SK-N-SH (cell line): ENCODE measurements at regions of chr17 and their contacts with region 1.

Region 1: DNA sequence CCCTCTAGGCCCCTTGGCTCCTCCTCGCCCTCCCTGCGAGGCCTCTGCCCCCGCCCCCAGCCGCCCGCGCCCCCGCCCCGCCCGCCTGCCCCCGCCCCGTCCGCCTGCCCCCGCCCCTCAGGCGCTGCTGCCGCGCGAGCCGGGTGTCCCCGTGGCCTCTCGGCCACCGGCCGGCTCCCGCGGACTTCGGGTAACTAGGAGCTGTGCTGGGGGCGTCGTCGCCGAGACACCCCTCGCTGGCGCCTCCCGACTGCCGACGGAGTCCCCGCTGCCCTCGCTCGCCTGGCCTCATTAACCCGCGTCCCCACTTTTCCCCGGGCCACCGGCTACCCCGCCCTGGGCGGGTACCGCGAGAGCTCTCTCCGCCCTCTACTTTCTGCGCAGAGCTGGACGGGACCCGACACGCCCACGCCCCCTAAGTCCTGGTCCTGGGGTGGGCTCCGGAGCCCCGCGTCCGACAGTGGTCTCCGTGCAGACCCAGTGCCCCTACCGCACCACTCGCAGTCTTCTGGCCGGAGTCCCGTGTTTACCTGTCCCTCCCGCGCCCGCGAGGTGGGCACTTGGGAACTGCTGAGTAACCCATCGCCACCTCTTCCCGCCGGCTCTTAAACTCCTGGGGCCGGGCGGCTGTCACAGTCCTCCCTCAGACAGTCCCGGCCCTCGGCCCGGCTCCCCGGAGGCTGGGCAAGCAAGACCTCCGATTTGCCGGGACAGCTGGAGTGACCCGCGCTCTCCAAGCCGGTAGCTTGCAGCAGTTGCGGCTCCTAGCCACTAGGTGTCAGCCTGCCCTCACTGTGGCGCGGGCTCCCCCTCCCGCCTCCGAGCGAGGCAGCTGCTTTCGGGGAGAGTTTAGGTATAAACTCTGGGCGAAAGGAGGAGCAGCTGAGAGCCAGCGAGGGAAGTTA is at the start of gene TLCD1:
- DNase-seq: peak; percentile 92
- H3K4me3 ChIP-seq: peak within 1 kb of the TSS; percentile 62 to 81
- H3K27ac ChIP-seq: peak within 1 kb of the TSS; percentile 88 to 97
- H3K4me1 ChIP-seq: peaks cover 16 to 41% of the 10 kb centered on the region in 2 experiments
- H3K27me3 ChIP-seq: no peaks in the 10 kb centered on the region
- CTCF ChIP-seq: peak; percentile 98
- EP300 ChIP-seq: no peak; a peak in 1 of 4 replicates
- RAD21 ChIP-seq: peak; percentile 98
- polyA plus RNA-seq, gene TLCD1: 18.3 and 21.6 TPM in 2 replicates

Region 2: DNA sequence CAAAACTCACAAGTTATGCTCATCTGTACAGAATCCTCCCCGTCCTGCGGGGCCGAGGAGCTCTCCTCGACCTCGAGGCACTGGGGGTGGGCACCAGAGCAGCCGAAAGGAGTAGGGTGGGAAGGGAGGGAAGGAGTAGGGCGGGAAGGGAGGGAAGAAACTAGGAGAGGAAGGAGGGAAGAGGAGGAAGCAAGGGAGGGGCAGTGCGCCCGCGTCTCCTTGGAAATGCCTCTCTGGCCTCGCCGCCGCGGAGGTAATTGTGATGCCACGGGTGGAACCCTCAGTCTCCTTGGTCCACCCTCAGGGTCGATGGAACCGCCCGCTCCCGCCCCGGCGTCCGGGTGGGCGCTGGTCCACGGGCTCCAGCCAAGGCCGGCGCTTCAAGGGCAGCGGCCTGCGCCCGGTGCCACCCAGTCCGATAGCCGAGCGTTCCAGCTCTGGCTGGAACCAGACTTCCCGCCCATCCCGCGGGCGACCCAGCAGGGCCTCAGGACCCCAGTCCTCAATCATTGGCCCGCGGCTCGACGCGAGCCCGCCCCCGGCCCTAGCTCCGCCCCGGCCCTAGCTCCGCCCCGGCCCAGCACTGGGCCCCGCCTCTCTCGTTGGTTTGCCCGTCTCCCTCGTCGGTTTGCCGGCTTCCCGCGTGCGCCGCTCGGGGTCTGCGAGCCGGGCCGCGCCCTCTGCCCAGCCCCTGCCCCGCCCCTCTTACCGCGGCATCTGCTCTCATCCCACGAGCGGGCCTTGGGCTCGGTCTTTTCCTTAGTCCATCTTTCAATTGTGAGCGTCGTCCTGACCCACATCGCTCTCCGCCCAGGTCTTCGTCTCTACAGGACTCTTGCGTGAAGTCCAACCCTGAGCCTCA is 15.4 kb before region 1 on chr17:
- CTCF ChIA-PET with region 1: interaction called, 25 read pairs
- POLR2A ChIA-PET with region 1: interaction called, 46 read pairs
- DNase-seq: peak; percentile 99
- H3K4me3 ChIP-seq: peak overlapping the region; percentile 59 to 69
- H3K27ac ChIP-seq: peak overlapping the region; percentile 78 to 90
- H3K4me1 ChIP-seq: peaks cover 0 to 13% of the 10 kb centered on the region in 2 experiments; a peak in 2 of 4 replicates
- H3K27me3 ChIP-seq: no peaks in the 10 kb centered on the region
- CTCF ChIP-seq: no peak
- EP300 ChIP-seq: 0 out of 4 replicates have a peak, but pooled peaks of 1 of the 2 experiments have one; percentile 9
- RAD21 ChIP-seq: no peak

Region 3: GRCh38 chr17:28750178-28751047 is 23.9 kb after region 1 on chr17:
- CTCF ChIA-PET with region 1: interaction called, 612 read pairs
- POLR2A ChIA-PET with region 1: interaction called, 90 read pairs
- DNase-seq: peak; percentile 87
- H3K4me3 ChIP-seq: peak overlapping the region in 1 of 2 experiments; percentile 33; a peak in 1 of 4 replicates
- H3K27ac ChIP-seq: peak overlapping the region; percentile 36 to 44; a peak in 2 of 4 replicates
- H3K4me1 ChIP-seq: peaks cover 22 to 32% of the 10 kb centered on the region in 2 experiments; a peak in 3 of 4 replicates
- H3K27me3 ChIP-seq: no peaks in the 10 kb centered on the region
- CTCF ChIP-seq: peak; percentile 97
- EP300 ChIP-seq: peak in 1 of 2 experiments; percentile 18; a peak in 1 of 4 replicates
- RAD21 ChIP-seq: peak; percentile 86

Region 4: GRCh38 chr17:28792877-28793661 is 66.6 kb after region 1 on chr17:
- CTCF ChIA-PET with region 1: no interaction called
- POLR2A ChIA-PET with region 1: no interaction called
- DNase-seq: no peak
- H3K4me3 ChIP-seq: no peak overlapping the region
- H3K27ac ChIP-seq: no peak overlapping the region
- H3K4me1 ChIP-seq: no peaks in the 10 kb centered on the region
- H3K27me3 ChIP-seq: no peaks in the 10 kb centered on the region
- CTCF ChIP-seq: no peak
- EP300 ChIP-seq: no peak
- RAD21 ChIP-seq: no peak

Region 5: GRCh38 chr17:28842282-28843012 is 116.0 kb after region 1 on chr17 and contains the start of gene FAM222B:
- CTCF ChIA-PET with region 1: interaction called, 10 read pairs
- POLR2A ChIA-PET with region 1: no interaction called
- DNase-seq: peak; percentile 99
- H3K4me3 ChIP-seq: peak within 1 kb of the TSS; percentile 70 to 91
- H3K27ac ChIP-seq: peak within 1 kb of the TSS; percentile 58 to 73
- H3K4me1 ChIP-seq: peaks cover 3 to 5% of the 10 kb centered on the region in 2 experiments; a peak in 1 of 4 replicates
- H3K27me3 ChIP-seq: no peaks in the 10 kb centered on the region
- CTCF ChIP-seq: no peak
- EP300 ChIP-seq: no peak
- RAD21 ChIP-seq: no peak
- polyA plus RNA-seq, gene FAM222B: 5.8 and 9.0 TPM in 2 replicates

Region 6: DNA sequence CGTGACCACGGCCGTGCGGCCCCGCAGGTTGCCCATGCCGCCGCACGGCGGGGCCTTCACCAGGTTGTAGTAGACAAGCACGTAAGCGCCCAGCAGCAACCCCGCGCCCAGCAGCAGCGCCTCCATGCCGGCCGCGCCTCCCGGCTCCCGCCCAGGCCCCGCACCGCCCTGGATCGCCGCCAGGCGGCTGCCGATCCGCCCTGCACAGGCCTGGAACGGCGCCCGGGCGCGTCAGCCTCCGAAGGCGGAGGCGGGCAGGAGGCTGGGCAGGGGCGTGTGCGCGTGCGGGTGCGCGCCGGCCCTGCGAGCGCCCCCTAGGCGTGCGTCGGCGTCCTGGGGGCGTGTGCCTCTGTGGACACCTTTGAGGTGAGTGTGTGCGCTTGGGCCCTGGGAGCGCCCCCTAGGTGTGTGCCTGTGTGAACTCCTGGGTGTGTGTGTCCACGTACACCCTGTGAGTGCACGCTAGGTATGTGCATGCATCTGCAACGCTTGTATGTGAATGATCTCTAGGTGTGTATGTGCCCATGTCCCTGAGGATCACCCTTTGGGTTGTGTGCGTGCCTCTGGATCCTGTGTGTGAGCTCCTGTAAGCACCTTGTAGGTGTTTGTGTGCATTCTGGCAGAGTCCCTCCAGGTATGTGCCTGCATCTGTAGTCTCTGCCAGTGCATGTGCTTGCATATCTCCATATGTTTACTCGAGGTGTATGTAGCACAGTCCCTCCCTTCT is 176.5 kb after region 1 on chr17 and contains the start of gene DHRS13:
- CTCF ChIA-PET with region 1: interaction called, 41 read pairs
- POLR2A ChIA-PET with region 1: interaction called, 4 read pairs
- DNase-seq: peak; percentile 99
- H3K4me3 ChIP-seq: peak within 1 kb of the TSS; percentile 71 to 75
- H3K27ac ChIP-seq: peak within 1 kb of the TSS; percentile 53 to 79
- H3K4me1 ChIP-seq: peaks cover 3 to 15% of the 10 kb centered on the region in 2 experiments; a peak in 2 of 4 replicates
- H3K27me3 ChIP-seq: no peaks in the 10 kb centered on the region
- CTCF ChIP-seq: peak; percentile 87
- EP300 ChIP-seq: no peak; a peak in 1 of 4 replicates
- RAD21 ChIP-seq: peak; percentile 55
- polyA plus RNA-seq, gene DHRS13: 7.4 and 7.6 TPM in 2 replicates

Region 7: GRCh38 chr17:28916302-28916934 is 189.9 kb after region 1 on chr17:
- CTCF ChIA-PET with region 1: interaction called, 29 read pairs
- POLR2A ChIA-PET with region 1: no interaction called
- DNase-seq: peak; percentile 49
- H3K4me3 ChIP-seq: peak overlapping the region in 1 of 2 experiments; percentile 33; a peak in 1 of 4 replicates
- H3K27ac ChIP-seq: no peak overlapping the region
- H3K4me1 ChIP-seq: no peaks in the 10 kb centered on the region
- H3K27me3 ChIP-seq: no peaks in the 10 kb centered on the region
- CTCF ChIP-seq: peak; percentile 71
- EP300 ChIP-seq: no peak
- RAD21 ChIP-seq: peak; percentile 62

Region 8: DNA sequence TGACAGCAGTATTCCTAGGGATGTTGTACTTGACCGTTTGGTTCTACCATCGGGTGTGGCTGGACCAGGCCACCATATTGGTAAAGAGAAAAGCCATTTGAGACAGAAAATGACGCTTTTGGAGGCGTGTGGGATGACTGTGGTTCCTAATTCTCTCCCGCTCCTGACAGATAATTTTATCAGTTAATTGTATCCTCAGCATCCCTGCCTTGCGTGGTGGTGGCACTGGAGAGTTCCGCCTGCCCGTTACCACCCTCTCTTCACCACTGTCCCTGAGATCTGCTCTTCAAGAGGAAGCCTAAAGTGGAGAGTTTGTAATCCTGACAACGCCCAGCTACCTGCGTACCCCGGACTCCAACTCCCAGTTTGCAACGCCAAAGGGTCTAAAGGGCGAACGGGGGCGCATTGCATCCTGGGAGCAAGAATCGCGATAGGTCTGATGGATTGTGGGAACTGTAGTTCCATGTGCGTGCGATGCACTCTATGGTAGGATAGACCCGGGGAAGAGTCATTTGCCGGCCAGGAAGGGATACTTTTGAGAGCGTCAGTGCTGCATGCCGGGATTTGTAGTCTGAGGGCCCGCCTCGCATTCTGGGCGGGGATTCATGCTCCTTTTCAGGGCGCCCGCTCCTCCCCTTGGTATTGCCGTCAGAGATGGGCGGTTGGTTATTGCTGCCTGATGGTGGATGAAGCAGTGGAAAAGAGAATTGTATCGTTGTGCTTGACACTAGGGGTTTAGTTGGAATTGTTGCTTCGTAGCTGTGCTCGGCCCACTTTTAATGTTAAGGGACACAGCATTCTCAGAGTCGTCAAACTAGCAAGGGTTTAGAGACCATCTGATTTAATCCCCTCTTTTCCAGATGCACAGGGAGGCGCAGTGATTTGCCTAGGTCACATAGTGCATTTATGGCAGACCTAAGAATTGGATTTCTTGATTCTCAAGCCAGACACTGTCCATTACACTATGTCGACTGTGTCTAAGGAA is 225.8 kb after region 1 on chr17:
- CTCF ChIA-PET with region 1: interaction called, 56 read pairs
- POLR2A ChIA-PET with region 1: interaction called, 5 read pairs
- DNase-seq: peak; percentile 88
- H3K4me3 ChIP-seq: peak overlapping the region; percentile 80 to 81
- H3K27ac ChIP-seq: peak overlapping the region; percentile 99 to 100
- H3K4me1 ChIP-seq: peaks cover 14 to 24% of the 10 kb centered on the region in 2 experiments
- H3K27me3 ChIP-seq: no peaks in the 10 kb centered on the region
- CTCF ChIP-seq: no peak
- EP300 ChIP-seq: no peak
- RAD21 ChIP-seq: no peak